Heart right ventricle (tissue), 16 donors: ENCODE measurements at regions of chr17 and their contacts with region 1.

Region 1: DNA sequence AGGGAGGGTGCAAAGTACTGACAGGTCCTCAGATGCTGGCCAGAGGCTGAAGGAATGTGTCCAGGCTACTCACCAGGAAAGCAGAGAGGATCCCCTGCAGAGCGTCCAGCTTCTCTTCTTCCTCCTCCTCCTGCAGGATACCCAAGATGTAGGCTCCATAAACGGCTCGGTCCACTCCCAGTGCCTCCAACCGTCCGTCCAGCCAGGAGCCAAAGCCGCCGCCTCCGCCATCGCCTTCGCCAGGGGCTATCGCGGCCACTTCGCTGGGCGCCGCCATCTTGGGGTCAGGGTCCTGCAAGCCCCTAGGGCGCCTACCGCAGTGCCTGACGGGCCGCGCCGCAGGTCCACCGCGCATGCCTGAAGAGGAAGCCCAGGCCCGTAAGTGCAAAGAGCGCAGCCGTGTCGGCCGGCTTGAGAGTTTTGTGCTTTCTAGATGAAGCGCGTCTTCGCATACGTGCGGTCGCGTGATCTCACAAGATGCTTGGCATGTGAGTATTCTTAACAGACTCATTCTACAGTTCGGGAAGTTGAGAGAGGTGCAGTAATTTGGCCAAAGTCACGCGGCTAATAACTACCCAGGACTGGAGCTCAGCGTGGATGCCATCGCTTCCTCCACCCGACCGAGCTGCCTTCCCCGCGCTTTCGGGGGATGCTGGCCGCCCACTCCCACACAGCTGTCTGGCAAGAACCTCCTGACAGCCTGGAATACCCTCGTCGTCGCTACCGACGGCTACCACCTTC is at the start of gene CCDC43:
- DNase-seq: peak; percentile 87 to 89
- ATAC-seq: peak; percentile 99 to 100 (median 99)
- H3K4me3 ChIP-seq: peak within 1 kb of the TSS; percentile 60 to 93 (median 78)
- H3K27ac ChIP-seq: peak within 1 kb of the TSS in 9 of 10 donors; percentile 73 to 87 (median 82)
- H3K4me1 ChIP-seq: peaks cover 0 to 25% (median 17%) of the 10 kb centered on the region in 9 donors
- H3K27me3 ChIP-seq: no peaks in the 10 kb centered on the region
- CTCF ChIP-seq: no peak
- total RNA-seq, gene CCDC43: 24.2 to 35.3 (median 30.9) TPM

Region 2: GRCh38 chr17:44708401-44709181 is 18.9 kb after region 1 on chr17 and contains the start of gene DBF4B:
- intact Hi-C with region 1: loop called in 1 of 10 experiments (anchors 1 kb)
- DNase-seq: peak; percentile 53 to 92
- ATAC-seq: peak; percentile 77 to 95 (median 89)
- H3K4me3 ChIP-seq: peak within 1 kb of the TSS; percentile 58 to 93 (median 79)
- H3K27ac ChIP-seq: peak within 1 kb of the TSS; percentile 1 to 85 (median 74)
- H3K4me1 ChIP-seq: peaks cover 0 to 20% (median 15%) of the 10 kb centered on the region in 9 donors
- H3K27me3 ChIP-seq: peaks cover 0 to 12% (median 0%) of the 10 kb centered on the region in 7 donors
- CTCF ChIP-seq: no peak
- total RNA-seq, gene DBF4B: 2.9 to 5.5 (median 4.0) TPM

Region 3: DNA sequence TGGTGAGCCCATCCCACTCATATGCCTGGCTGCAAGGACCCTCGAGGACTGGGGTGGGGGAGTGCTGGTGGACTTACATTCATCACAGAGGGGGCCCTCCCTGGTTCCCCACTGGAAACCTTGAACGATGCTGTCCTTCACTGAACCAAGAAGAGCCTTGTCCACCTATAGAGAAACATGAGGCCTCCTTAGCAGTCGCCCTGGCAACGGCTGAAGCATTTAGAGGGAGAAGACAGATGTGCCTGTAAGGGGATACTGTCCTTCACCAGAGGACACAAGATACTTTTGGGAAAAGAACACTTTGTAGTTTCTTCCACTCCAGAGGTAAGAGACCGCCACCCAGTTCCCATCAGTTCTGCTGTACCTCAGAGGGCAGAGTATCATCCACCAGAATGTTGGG is 164.5 kb after region 1 on chr17:
- intact Hi-C with region 1: no loop called
- DNase-seq: no peak
- ATAC-seq: no peak
- H3K4me3 ChIP-seq: no peak overlapping the region
- H3K27ac ChIP-seq: no peak overlapping the region
- H3K4me1 ChIP-seq: peaks cover 0 to 5% (median 0%) of the 10 kb centered on the region in 9 donors
- H3K27me3 ChIP-seq: no peaks in the 10 kb centered on the region
- CTCF ChIP-seq: no peak